Left colon (tissue), 2 donors: ENCODE measurements at regions of chr11 and their contacts with region 1.

Region 1: GRCh38 chr11:74255741-74256369 is 55.6 kb downstream of the P4HA3 start:
- DNase-seq: peak in 1 of 2 donors; percentile 38
- ATAC-seq: peak; percentile 78

Region 2: GRCh38 chr11:74069147-74070047 is 186.5 kb before region 1 on chr11:
- intact Hi-C with region 1: no loop called
- DNase-seq: no peak
- ATAC-seq: peak; percentile 33

Region 3: DNA sequence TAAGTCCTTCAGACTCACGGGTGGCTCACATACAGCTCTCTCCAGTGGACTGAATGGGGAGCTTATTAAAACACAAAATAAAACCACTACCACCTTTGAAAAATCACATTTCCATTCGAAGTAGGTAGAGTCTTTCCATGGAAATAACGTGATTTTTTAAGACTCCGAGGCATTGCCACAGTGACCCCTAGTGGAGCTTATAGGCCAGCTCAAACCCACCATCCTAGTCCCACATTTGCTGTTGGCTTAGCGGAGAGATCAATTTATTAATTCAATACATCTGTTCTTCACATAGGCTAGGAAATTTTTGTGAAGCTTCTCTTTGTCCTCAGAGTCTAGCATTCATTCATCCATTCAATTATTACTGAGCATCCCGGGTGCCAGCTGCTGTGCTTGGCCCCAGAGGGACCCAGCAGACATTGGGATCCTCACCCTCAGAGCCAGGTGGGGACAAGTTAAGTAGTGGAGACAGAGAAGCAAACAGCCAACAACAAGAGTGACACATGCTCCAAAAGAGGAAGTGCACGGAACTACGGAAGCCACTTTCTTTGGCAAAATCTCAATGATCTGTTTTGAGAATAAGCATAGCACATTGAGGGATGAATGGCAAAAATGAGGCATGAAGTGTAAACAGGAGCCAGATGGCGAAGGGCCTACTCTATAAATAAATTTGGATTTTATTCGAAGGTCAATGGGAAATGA is 65.8 kb after region 1 on chr11:
- intact Hi-C with region 1: loop called in 1 of 2 experiments (anchors 5 kb)
- DNase-seq: no peak
- ATAC-seq: peak; percentile 39

Region 4: GRCh38 chr11:74371279-74372049 is 115.6 kb after region 1 on chr11:
- intact Hi-C with region 1: loop called in 1 of 2 experiments (anchors 10 kb)
- DNase-seq: no peak
- ATAC-seq: no peak

Region 5: GRCh38 chr11:74449369-74449931 is 193.6 kb after region 1 on chr11:
- intact Hi-C with region 1: loop called (anchors 2 to 10 kb)
- DNase-seq: no peak
- ATAC-seq: peak; percentile 76